ENCODE measurements at regions of chr15 and their contacts with region 1.

Region 1: GRCh38 chr15:38440353-38441129 is 13.4 kb upstream of the FAM98B start:
- DNase-seq: no peak
- ATAC-seq: peak; percentile 96
- H3K4me3 Mint-ChIP-seq: no peak overlapping the region
- H3K27ac Mint-ChIP-seq: no peak overlapping the region
- H3K4me1 Mint-ChIP-seq: peaks cover 5% of the 10 kb centered on the region
- H3K27me3 Mint-ChIP-seq: peaks cover 34% of the 10 kb centered on the region
- CTCF ChIP-seq: peak; percentile 64

Region 2: DNA sequence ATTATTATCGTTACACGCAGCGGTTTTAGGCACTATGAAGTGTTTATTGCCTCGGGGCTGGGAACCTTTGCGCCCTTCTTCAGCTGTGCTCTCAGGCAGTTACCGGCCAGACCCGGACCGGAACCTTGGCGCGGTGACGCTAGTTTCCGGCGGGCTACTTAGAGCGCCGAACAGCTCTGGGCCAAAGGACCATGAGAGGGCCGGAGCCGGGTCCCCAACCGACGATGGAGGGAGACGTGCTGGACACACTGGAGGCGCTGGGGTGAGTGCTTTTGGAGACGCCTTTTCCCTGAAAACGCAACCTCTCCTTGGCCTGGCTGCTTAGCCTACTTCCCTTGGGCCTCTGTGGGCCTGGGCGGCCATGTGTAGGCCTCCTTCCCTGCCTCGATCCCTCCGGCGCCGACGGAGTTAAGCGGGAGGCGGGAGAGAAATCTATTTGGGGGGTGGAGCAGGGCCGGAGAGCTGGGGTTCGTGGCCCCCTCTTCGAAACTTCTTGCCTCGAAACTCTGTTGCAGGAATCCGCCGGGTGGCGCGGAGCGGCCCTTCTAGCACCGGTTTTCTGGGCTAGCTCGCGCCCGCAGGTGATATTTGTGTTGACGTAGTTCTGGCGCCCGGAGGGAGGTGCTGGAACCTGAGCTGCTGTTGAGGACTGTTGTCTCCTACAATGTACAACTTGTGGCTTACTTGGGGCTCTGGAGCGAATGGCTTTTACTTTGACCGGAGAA is 13.6 kb after region 1 on chr15 and contains the start of gene FAM98B:
- CTCF ChIA-PET with region 1: interaction called, 32 read pairs
- POLR2A ChIA-PET with region 1: interaction called, 9 read pairs
- intact Hi-C with region 1: no loop called
- DNase-seq: peak; percentile 92
- ATAC-seq: peak; percentile 90
- H3K4me3 Mint-ChIP-seq: peak within 1 kb of the TSS; percentile 97
- H3K27ac Mint-ChIP-seq: peak within 1 kb of the TSS; percentile 91
- H3K4me1 Mint-ChIP-seq: peaks cover 35% of the 10 kb centered on the region
- H3K27me3 Mint-ChIP-seq: peaks cover 2% of the 10 kb centered on the region
- CTCF ChIP-seq: no peak
- total RNA-seq, gene FAM98B: 29.9 and 30.7 TPM in 2 replicates

Region 3: DNA sequence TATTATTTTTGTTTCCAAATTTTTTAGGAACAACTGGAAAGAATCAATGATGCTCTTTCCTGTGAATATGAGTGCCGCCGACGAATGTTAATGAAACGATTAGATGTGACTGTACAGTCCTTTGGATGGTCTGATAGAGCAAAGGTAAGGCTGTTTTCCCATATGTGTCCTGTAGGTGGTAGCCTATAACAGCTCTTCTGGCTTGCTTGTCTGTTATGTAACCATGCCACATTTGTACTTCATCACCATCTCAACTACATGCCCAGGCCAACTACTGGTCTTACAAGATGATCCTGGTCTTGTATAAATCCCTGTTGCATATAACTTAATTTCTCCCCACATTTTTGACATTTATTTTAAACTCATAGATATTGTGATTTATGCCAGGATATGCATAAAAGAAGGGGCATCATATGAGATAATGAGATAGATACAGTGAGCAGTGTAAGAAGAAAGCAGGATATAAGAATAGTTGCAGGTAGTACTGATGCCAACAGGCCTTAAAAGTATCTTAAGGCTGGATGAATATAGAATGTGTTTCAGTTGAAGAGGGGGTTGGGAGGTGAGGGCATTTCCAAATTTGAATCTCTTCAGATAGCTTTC is 33.7 kb after region 1 on chr15:
- CTCF ChIA-PET with region 1: interaction called, 7 read pairs
- POLR2A ChIA-PET with region 1: no interaction called
- intact Hi-C with region 1: loop called (anchors 1 kb)
- DNase-seq: no peak
- ATAC-seq: peak; percentile 100
- H3K4me3 Mint-ChIP-seq: no peak overlapping the region
- H3K27ac Mint-ChIP-seq: no peak overlapping the region
- H3K4me1 Mint-ChIP-seq: no peaks in the 10 kb centered on the region
- H3K27me3 Mint-ChIP-seq: no peaks in the 10 kb centered on the region
- CTCF ChIP-seq: no peak

Region 4: GRCh38 chr15:38699633-38700230 is 259.2 kb after region 1 on chr15:
- CTCF ChIA-PET with region 1: interaction called, 130 read pairs
- POLR2A ChIA-PET with region 1: interaction called, 6 read pairs
- intact Hi-C with region 1: loop called (anchors 1 kb)
- DNase-seq: no peak
- ATAC-seq: peak; percentile 88
- H3K4me3 Mint-ChIP-seq: no peak overlapping the region
- H3K27ac Mint-ChIP-seq: no peak overlapping the region
- H3K4me1 Mint-ChIP-seq: no peaks in the 10 kb centered on the region
- H3K27me3 Mint-ChIP-seq: no peaks in the 10 kb centered on the region
- CTCF ChIP-seq: no peak

Region 5: DNA sequence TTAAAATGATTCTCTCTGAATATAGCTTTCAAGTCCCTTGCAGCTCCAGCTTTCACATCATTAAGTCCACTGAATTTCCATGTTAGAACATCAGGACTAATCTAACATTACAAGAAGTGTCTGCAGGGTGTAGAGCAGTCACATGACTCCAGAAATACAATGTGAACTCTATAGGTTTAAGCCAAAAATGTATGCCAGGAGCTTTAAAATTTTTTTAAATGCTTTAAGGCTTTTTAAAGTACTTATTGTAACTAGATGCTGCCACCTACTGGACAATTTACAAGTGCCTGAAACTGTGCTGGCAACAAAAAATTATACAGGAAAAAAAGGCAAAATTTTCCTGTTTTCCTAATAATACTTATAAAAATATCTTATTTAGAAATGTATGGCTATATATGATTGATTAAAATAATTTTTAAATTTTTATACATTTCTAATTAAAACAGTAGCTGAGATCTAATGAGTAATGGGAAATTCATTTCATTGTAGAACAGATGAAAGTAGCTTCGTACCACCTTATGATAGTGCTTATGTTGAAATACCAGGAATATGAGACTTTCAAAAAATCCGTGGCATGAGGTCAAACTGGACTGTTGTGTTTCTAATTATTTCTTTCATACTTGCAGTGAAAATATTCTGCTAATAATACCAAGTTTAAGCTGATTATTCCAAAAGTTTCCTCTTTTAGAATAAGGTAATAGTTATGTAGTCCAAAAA is 1316.4 kb after region 1 on chr15:
- CTCF ChIA-PET with region 1: interaction called, 8 read pairs
- POLR2A ChIA-PET with region 1: no interaction called
- intact Hi-C with region 1: loop called (anchors 5 kb)
- DNase-seq: no peak
- ATAC-seq: no peak
- H3K4me3 Mint-ChIP-seq: no peak overlapping the region
- H3K27ac Mint-ChIP-seq: no peak overlapping the region
- H3K4me1 Mint-ChIP-seq: no peaks in the 10 kb centered on the region
- H3K27me3 Mint-ChIP-seq: peaks cover 5% of the 10 kb centered on the region
- CTCF ChIP-seq: peak; percentile 92